ENCODE measurements at regions of chr20 and their contacts with region 1.

Region 1: GRCh38 chr20:34825530-34826362 is at the start of gene NCOA6:
- DNase-seq: peak; percentile 73 to 79 (median 74)
- H3K4me3 ChIP-seq: peak within 1 kb of the TSS; percentile 80 to 91
- H3K4me3 Mint-ChIP-seq: peak within 1 kb of the TSS; percentile 93 to 98 (median 97)
- H3K27ac ChIP-seq: peak within 1 kb of the TSS; percentile 78
- H3K27ac Mint-ChIP-seq: peak within 1 kb of the TSS; percentile 93 to 99 (median 95)
- H3K4me1 ChIP-seq: peaks cover 34% of the 10 kb centered on the region
- H3K4me1 Mint-ChIP-seq: peaks cover 23 to 48% (median 39%) of the 10 kb centered on the region in 4 donors
- H3K27me3 ChIP-seq: no peaks in the 10 kb centered on the region
- H3K27me3 Mint-ChIP-seq: peaks cover 0 to 1% of the 10 kb centered on the region in 2 donors
- total RNA-seq, gene NCOA6: 29.5 to 29.9 TPM

Region 2: GRCh38 chr20:34302723-34303528 is 522.8 kb before region 1 on chr20 and contains the start of gene AHCY:
- CTCF ChIA-PET with region 1: no interaction called
- POLR2A ChIA-PET with region 1: no interaction called
- intact Hi-C with region 1: loop called (anchors 1 kb)
- DNase-seq: peak; percentile 90 to 95 (median 93)
- H3K4me3 ChIP-seq: peak within 1 kb of the TSS; percentile 86 to 94
- H3K4me3 Mint-ChIP-seq: peak within 1 kb of the TSS; percentile 90 to 98 (median 95)
- H3K27ac ChIP-seq: peak within 1 kb of the TSS; percentile 81
- H3K27ac Mint-ChIP-seq: peak within 1 kb of the TSS; percentile 87 to 98 (median 97)
- H3K4me1 ChIP-seq: peaks cover 11% of the 10 kb centered on the region
- H3K4me1 Mint-ChIP-seq: peaks cover 9 to 26% (median 10%) of the 10 kb centered on the region in 4 donors
- H3K27me3 ChIP-seq: no peaks in the 10 kb centered on the region
- H3K27me3 Mint-ChIP-seq: no peaks in the 10 kb centered on the region
- total RNA-seq, gene AHCY: 23.1 to 24.2 TPM

Measured in CD4-positive, alpha-beta memory T cell (primary cell).